Caco-2 (cell line): ENCODE measurements at regions of chr6 and their contacts with region 1.

Region 1: DNA sequence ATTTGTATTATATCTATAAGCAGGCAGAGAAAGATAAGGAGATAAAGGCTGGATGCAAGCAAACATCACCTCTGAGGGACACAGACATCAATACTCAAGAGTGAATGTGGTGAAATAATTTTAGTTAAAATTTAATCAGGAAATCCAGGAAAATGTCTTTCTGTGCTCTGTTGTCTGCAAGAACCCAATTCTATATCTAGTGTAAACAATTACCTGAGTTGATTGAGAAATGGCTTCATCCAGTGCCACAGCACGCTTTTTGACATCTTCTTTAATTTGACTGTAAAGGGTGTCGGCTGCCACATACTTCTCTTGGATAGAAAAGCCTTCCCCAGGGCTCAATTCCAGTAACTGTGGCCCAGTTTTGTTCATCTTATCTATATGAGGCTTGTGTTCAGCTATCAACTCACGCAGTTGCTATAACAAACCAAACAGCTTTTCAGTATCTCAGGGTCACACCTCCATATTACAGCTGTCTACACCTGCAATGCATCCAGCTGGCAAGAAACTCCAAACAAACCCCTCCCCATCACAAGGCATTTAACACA is 131.6 kb downstream of the DST start:
- DNase-seq: peak; percentile 60 to 62
- H3K4me3 ChIP-seq: no peak overlapping the region
- H3K4me3 Mint-ChIP-seq: no peak overlapping the region
- H3K27ac Mint-ChIP-seq: peak overlapping the region; percentile 92
- H3K4me1 ChIP-seq: peaks cover 17% of the 10 kb centered on the region
- H3K4me1 Mint-ChIP-seq: peaks cover 21% of the 10 kb centered on the region
- H3K27me3 ChIP-seq: no peaks in the 10 kb centered on the region
- H3K27me3 Mint-ChIP-seq: no peaks in the 10 kb centered on the region
- CTCF ChIP-seq: no peak

Region 2: GRCh38 chr6:56399250-56399671 is 111.8 kb before region 1 on chr6:
- CTCF ChIA-PET with region 1: no interaction called
- POLR2A ChIA-PET with region 1: interaction called, 7 read pairs
- intact Hi-C with region 1: loop called (anchors 1 kb)
- DNase-seq: peak; percentile 78 to 86
- H3K4me3 ChIP-seq: no peak overlapping the region
- H3K4me3 Mint-ChIP-seq: peak overlapping the region; percentile 71
- H3K27ac Mint-ChIP-seq: peak overlapping the region; percentile 97
- H3K4me1 ChIP-seq: peaks cover 36% of the 10 kb centered on the region
- H3K4me1 Mint-ChIP-seq: peaks cover 52% of the 10 kb centered on the region
- H3K27me3 ChIP-seq: no peaks in the 10 kb centered on the region
- H3K27me3 Mint-ChIP-seq: no peaks in the 10 kb centered on the region
- CTCF ChIP-seq: no peak

Region 3: GRCh38 chr6:56491606-56492328 is 19.3 kb before region 1 on chr6:
- CTCF ChIA-PET with region 1: no interaction called
- POLR2A ChIA-PET with region 1: no interaction called
- intact Hi-C with region 1: loop called (anchors 2 kb)
- DNase-seq: no peak
- H3K4me3 ChIP-seq: no peak overlapping the region
- H3K4me3 Mint-ChIP-seq: no peak overlapping the region
- H3K27ac Mint-ChIP-seq: no peak overlapping the region
- H3K4me1 ChIP-seq: no peaks in the 10 kb centered on the region
- H3K4me1 Mint-ChIP-seq: no peaks in the 10 kb centered on the region
- H3K27me3 ChIP-seq: no peaks in the 10 kb centered on the region
- H3K27me3 Mint-ChIP-seq: no peaks in the 10 kb centered on the region
- CTCF ChIP-seq: no peak

Region 4: GRCh38 chr6:56521454-56521853 is 10.4 kb after region 1 on chr6:
- CTCF ChIA-PET with region 1: no interaction called
- POLR2A ChIA-PET with region 1: no interaction called
- intact Hi-C with region 1: loop called (anchors 1 kb)
- DNase-seq: no peak
- H3K4me3 ChIP-seq: no peak overlapping the region
- H3K4me3 Mint-ChIP-seq: no peak overlapping the region
- H3K27ac Mint-ChIP-seq: no peak overlapping the region
- H3K4me1 ChIP-seq: peaks cover 12% of the 10 kb centered on the region
- H3K4me1 Mint-ChIP-seq: peaks cover 18% of the 10 kb centered on the region
- H3K27me3 ChIP-seq: no peaks in the 10 kb centered on the region
- H3K27me3 Mint-ChIP-seq: no peaks in the 10 kb centered on the region
- CTCF ChIP-seq: no peak